CD14-positive monocyte (primary cell): ENCODE measurements at regions of chr1 and their contacts with region 1.

Region 1: DNA sequence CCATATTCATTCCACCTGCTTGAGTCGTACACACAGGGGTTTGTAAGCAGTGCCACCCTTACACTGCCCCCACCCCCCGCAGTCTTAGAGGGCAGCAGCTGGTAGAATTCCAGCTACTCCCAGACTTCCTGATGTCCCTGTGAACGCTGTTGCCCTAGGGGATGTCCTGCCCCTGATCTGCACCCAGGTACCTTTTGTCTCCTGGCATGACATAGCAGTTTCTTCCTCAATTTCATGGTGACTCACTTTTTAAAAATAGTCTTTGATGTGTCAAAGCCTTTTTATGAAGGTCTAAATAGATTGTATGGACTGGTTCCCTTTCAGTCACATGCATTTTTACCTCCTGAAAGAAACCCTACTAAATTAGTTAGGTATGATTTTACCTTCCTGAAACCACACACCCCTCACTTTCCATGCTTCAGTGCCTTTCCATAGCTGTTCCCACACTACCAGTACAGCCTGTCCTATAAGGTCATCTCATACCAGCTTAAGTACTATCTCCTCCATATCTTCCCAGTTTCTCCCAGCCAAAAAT is 76.4 kb downstream of the ST3GAL3 start:
- DNase-seq: peak in 2 of 3 donors; percentile 42 to 67
- H3K4me3 ChIP-seq: no peak overlapping the region
- H3K4me3 Mint-ChIP-seq: no peak overlapping the region
- H3K27ac ChIP-seq: no peak overlapping the region
- H3K27ac Mint-ChIP-seq: peak overlapping the region in 6 of 7 donors; percentile 34 to 85 (median 68)
- H3K4me1 ChIP-seq: peaks cover 51 to 67% of the 10 kb centered on the region in 2 donors
- H3K4me1 Mint-ChIP-seq: peaks cover 54% of the 10 kb centered on the region
- H3K27me3 ChIP-seq: no peaks in the 10 kb centered on the region
- H3K27me3 Mint-ChIP-seq: peaks cover 0 to 2% (median 2%) of the 10 kb centered on the region in 3 donors
- CTCF ChIP-seq: no peak

Region 2: GRCh38 chr1:43766818-43767525 is 16.8 kb before region 1 on chr1:
- intact Hi-C with region 1: no loop called
- DNase-seq: peak in 2 of 3 donors; percentile 18 to 21
- H3K4me3 ChIP-seq: no peak overlapping the region
- H3K4me3 Mint-ChIP-seq: no peak overlapping the region
- H3K27ac ChIP-seq: no peak overlapping the region
- H3K27ac Mint-ChIP-seq: no peak overlapping the region
- H3K4me1 ChIP-seq: peaks cover 12 to 26% of the 10 kb centered on the region in 2 donors
- H3K4me1 Mint-ChIP-seq: peaks cover 22% of the 10 kb centered on the region
- H3K27me3 ChIP-seq: no peaks in the 10 kb centered on the region
- H3K27me3 Mint-ChIP-seq: no peaks in the 10 kb centered on the region
- CTCF ChIP-seq: no peak

Region 3: DNA sequence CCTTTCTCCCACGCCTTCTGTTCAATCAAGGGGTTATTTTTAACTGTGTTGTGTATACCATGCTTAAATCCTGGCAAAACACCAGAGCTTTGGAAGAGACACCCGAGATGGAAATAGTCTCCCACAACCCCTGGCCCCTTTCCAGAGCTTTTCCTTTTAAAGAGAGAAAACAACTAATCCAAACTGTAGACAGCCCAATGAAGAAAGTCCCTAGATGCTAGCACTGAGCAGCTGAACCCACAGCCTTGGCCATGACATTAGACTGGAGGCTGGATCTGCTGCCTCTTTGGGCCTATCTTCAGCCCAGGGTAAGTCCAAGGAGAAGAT is 85.0 kb after region 1 on chr1:
- intact Hi-C with region 1: loop called (anchors 5 to 10 kb)
- DNase-seq: no peak
- H3K4me3 ChIP-seq: no peak overlapping the region
- H3K4me3 Mint-ChIP-seq: no peak overlapping the region
- H3K27ac ChIP-seq: peak overlapping the region in 1 of 2 donors; percentile 77
- H3K27ac Mint-ChIP-seq: peak overlapping the region; percentile 84 to 93 (median 91)
- H3K4me1 ChIP-seq: peaks cover 19 to 39% of the 10 kb centered on the region in 2 donors
- H3K4me1 Mint-ChIP-seq: peaks cover 42% of the 10 kb centered on the region
- H3K27me3 ChIP-seq: no peaks in the 10 kb centered on the region
- H3K27me3 Mint-ChIP-seq: peaks cover 0 to 1% (median 0%) of the 10 kb centered on the region in 3 donors
- CTCF ChIP-seq: no peak